GM12878 (cell line): ENCODE measurements at regions of chr13 and their contacts with region 1.

Region 1: GRCh38 chr13:101144808-101145419 is 271.4 kb downstream of the NALCN start:
- DNase-seq: peak; percentile 5
- ATAC-seq: peak; percentile 80
- H3K4me3 ChIP-seq: no peak overlapping the region
- H3K27ac ChIP-seq: no peak overlapping the region
- H3K4me1 ChIP-seq: no peaks in the 10 kb centered on the region
- H3K27me3 ChIP-seq: no peaks in the 10 kb centered on the region; a peak in 1 of 4 replicates
- CTCF ChIP-seq: peak; percentile 50 to 74 (median 51); a peak in 5 of 6 replicates
- EP300 ChIP-seq: no peak
- POLR2A ChIP-seq: no peak
- RAD21 ChIP-seq: peak; percentile 73

Region 2: GRCh38 chr13:101127741-101128353 is 17.1 kb before region 1 on chr13:
- CTCF ChIA-PET with region 1: interaction called, 17 read pairs
- POLR2A ChIA-PET with region 1: no interaction called
- RAD21 ChIA-PET with region 1: interaction called, 3 read pairs
- SMC1A ChIA-PET with region 1: interaction called, 5 read pairs
- in situ Hi-C with region 1: no loop called
- intact Hi-C with region 1: no loop called
- DNase-seq: no peak
- ATAC-seq: peak; percentile 90
- H3K4me3 ChIP-seq: no peak overlapping the region
- H3K27ac ChIP-seq: no peak overlapping the region
- H3K4me1 ChIP-seq: no peaks in the 10 kb centered on the region
- H3K27me3 ChIP-seq: no peaks in the 10 kb centered on the region
- CTCF ChIP-seq: peak; percentile 61 to 76 (median 68)
- EP300 ChIP-seq: no peak
- POLR2A ChIP-seq: no peak
- RAD21 ChIP-seq: peak; percentile 75

Region 3: DNA sequence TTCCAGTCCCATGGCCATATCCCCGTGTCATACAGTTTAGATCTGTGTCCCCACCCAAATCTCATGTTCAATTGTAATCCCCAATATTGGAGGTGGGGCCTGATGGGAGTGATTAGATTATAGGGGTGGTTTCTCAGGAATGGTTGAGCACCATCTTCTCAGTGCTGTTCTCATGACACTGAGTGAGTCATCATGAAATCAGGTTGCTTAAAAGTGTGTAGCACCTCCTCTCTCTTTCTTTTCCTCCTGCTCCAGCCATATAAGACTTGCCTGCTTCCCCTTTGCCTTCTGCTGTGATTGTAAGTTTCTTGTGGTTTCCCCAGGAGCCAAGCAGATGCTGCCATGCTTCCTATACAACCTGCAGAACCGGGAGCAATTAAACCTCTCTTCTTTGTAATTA is 73.6 kb after region 1 on chr13:
- CTCF ChIA-PET with region 1: no interaction called
- POLR2A ChIA-PET with region 1: no interaction called
- RAD21 ChIA-PET with region 1: no interaction called
- SMC1A ChIA-PET with region 1: no interaction called
- in situ Hi-C with region 1: no loop called
- intact Hi-C with region 1: no loop called
- DNase-seq: no peak
- ATAC-seq: no peak
- H3K4me3 ChIP-seq: no peak overlapping the region
- H3K27ac ChIP-seq: no peak overlapping the region
- H3K4me1 ChIP-seq: no peaks in the 10 kb centered on the region
- H3K27me3 ChIP-seq: no peaks in the 10 kb centered on the region
- CTCF ChIP-seq: no peak
- EP300 ChIP-seq: no peak
- POLR2A ChIP-seq: no peak
- RAD21 ChIP-seq: no peak

Region 4: GRCh38 chr13:101238555-101238954 is 93.6 kb after region 1 on chr13:
- CTCF ChIA-PET with region 1: no interaction called
- POLR2A ChIA-PET with region 1: no interaction called
- RAD21 ChIA-PET with region 1: no interaction called
- SMC1A ChIA-PET with region 1: no interaction called
- in situ Hi-C with region 1: no loop called
- intact Hi-C with region 1: no loop called
- DNase-seq: no peak
- ATAC-seq: no peak
- H3K4me3 ChIP-seq: no peak overlapping the region
- H3K27ac ChIP-seq: no peak overlapping the region
- H3K4me1 ChIP-seq: no peaks in the 10 kb centered on the region
- H3K27me3 ChIP-seq: no peaks in the 10 kb centered on the region
- CTCF ChIP-seq: no peak
- EP300 ChIP-seq: no peak
- POLR2A ChIP-seq: no peak
- RAD21 ChIP-seq: no peak

Region 5: DNA sequence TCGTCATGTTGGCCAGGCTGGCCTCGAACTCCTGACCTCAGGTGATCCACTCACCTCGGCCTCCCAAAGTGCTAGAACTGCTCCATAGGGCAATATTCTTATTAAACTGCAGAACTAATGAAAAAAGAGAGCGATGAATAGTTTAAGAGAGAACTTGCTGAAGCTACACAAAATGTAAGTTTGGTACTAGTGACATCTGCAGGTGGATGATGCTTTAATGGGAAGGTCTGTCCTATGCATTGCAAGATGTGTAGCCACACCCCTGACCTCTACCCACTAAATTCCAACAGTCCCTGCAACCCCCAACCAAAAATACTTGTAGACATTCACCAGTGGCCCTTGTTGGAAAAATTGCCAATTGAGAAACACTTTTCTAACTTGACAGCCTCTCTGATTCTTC is 153.6 kb after region 1 on chr13:
- CTCF ChIA-PET with region 1: interaction called, 40 read pairs
- POLR2A ChIA-PET with region 1: no interaction called
- RAD21 ChIA-PET with region 1: interaction called, 32 read pairs
- SMC1A ChIA-PET with region 1: interaction called, 31 read pairs
- in situ Hi-C with region 1: no loop called
- intact Hi-C with region 1: loop called (anchors 5 kb)
- DNase-seq: no peak
- ATAC-seq: peak; percentile 57
- H3K4me3 ChIP-seq: no peak overlapping the region
- H3K27ac ChIP-seq: no peak overlapping the region
- H3K4me1 ChIP-seq: no peaks in the 10 kb centered on the region
- H3K27me3 ChIP-seq: no peaks in the 10 kb centered on the region; a peak in 1 of 4 replicates
- CTCF ChIP-seq: peak in 1 of 3 experiments; percentile 43; a peak in 1 of 6 replicates
- EP300 ChIP-seq: no peak
- POLR2A ChIP-seq: no peak
- RAD21 ChIP-seq: 0 out of 2 replicates have a peak, but pooled peaks have one; percentile 13

Region 6: DNA sequence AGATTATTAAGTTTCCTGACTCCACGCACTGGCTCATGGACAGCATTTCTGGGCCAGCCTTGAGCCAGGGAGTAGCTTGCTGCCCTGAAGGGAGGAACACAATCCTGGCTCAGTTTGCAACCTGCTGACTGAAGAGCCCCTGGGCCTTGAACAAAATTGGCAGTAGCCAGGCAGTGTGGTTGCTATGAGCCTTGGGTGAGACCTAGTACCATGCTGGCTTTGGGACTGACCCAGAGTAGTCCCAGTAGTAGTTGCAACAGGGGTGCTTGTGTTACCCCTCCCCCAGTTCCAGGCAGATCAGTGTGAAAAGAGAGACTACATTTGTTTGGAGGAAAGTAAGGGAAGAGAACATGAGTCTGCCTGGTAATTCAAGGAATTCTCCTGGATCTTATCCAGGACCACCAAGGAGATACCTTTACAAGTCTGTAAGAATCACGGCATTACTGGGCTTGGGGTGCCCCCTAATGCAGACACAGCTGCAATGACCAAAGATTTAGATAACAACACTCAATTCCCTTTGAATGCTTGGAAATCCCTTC is 329.6 kb after region 1 on chr13:
- CTCF ChIA-PET with region 1: interaction called, 9 read pairs
- POLR2A ChIA-PET with region 1: no interaction called
- RAD21 ChIA-PET with region 1: interaction called, 5 read pairs
- SMC1A ChIA-PET with region 1: interaction called, 6 read pairs
- in situ Hi-C with region 1: no loop called
- intact Hi-C with region 1: loop called (anchors 2 kb)
- DNase-seq: no peak
- ATAC-seq: no peak
- H3K4me3 ChIP-seq: no peak overlapping the region
- H3K27ac ChIP-seq: no peak overlapping the region
- H3K4me1 ChIP-seq: no peaks in the 10 kb centered on the region
- H3K27me3 ChIP-seq: no peaks in the 10 kb centered on the region
- CTCF ChIP-seq: peak in 2 of 3 experiments; percentile 15 to 34; a peak in 2 of 6 replicates
- EP300 ChIP-seq: no peak
- POLR2A ChIP-seq: no peak
- RAD21 ChIP-seq: peak; percentile 48

Region 7: GRCh38 chr13:101757446-101758039 is 612.6 kb after region 1 on chr13:
- CTCF ChIA-PET with region 1: interaction called, 37 read pairs
- POLR2A ChIA-PET with region 1: interaction called, 5 read pairs
- RAD21 ChIA-PET with region 1: interaction called, 17 read pairs
- SMC1A ChIA-PET with region 1: interaction called, 19 read pairs
- in situ Hi-C with region 1: loop called (anchors 10 kb)
- intact Hi-C with region 1: loop called (anchors 1 kb)
- DNase-seq: no peak
- ATAC-seq: peak; percentile 94
- H3K4me3 ChIP-seq: no peak overlapping the region
- H3K27ac ChIP-seq: no peak overlapping the region
- H3K4me1 ChIP-seq: no peaks in the 10 kb centered on the region
- H3K27me3 ChIP-seq: no peaks in the 10 kb centered on the region; a peak in 1 of 4 replicates
- CTCF ChIP-seq: peak; percentile 49 to 68 (median 53); a peak in 5 of 6 replicates
- EP300 ChIP-seq: no peak
- POLR2A ChIP-seq: no peak
- RAD21 ChIP-seq: peak; percentile 81

Region 8: DNA sequence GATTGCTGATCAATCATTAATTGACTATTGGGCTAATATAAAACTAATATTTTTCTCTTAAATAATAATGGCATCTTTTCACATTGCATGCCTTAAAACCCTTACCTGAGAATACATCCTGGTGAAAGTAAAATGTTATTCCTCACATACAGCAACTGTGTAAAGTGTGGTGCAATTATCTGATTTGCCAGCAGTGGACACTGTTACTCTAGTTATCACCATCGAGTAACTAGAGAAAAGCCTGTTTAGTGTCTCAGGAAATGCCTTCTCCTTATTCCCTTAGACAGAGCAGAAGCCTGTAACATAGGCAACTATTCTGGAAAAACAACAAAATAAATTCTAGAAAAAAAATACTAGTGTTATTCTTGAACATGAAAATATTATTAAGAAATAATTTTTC is 797.1 kb after region 1 on chr13:
- CTCF ChIA-PET with region 1: interaction called, 8 read pairs
- POLR2A ChIA-PET with region 1: no interaction called
- RAD21 ChIA-PET with region 1: no interaction called
- SMC1A ChIA-PET with region 1: no interaction called
- in situ Hi-C with region 1: no loop called
- intact Hi-C with region 1: loop called (anchors 10 kb)
- DNase-seq: no peak
- ATAC-seq: peak; percentile 78
- H3K4me3 ChIP-seq: no peak overlapping the region
- H3K27ac ChIP-seq: no peak overlapping the region
- H3K4me1 ChIP-seq: no peaks in the 10 kb centered on the region
- H3K27me3 ChIP-seq: no peaks in the 10 kb centered on the region
- CTCF ChIP-seq: peak; percentile 62 to 63 (median 63)
- EP300 ChIP-seq: no peak
- POLR2A ChIP-seq: no peak
- RAD21 ChIP-seq: peak; percentile 72

Region 9: DNA sequence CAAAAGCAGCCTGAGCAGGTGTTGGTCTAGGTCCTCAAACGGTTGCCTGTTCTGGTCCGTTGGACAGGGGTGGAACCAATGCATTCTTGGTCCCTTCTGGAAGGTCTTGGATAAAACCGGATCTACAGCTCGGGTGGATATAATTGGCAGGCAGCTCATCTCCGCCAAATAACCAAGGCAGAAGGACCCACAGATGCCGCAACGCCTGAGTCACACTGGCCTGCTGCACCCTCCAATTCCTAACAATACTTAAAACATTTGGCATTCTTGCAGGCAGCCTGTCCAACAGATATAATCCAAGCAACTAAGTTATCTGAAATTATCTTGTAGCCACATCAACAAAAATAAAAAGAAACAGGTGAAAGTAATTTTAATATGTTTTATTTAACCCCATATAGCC is 1315.9 kb after region 1 on chr13:
- CTCF ChIA-PET with region 1: interaction called, 11 read pairs
- POLR2A ChIA-PET with region 1: no interaction called
- RAD21 ChIA-PET with region 1: interaction called, 3 read pairs
- SMC1A ChIA-PET with region 1: interaction called, 3 read pairs
- in situ Hi-C with region 1: loop called (anchors 25 kb)
- intact Hi-C with region 1: loop called (anchors 2 kb)
- DNase-seq: no peak
- ATAC-seq: no peak
- H3K4me3 ChIP-seq: no peak overlapping the region
- H3K27ac ChIP-seq: no peak overlapping the region
- H3K4me1 ChIP-seq: no peaks in the 10 kb centered on the region
- H3K27me3 ChIP-seq: no peaks in the 10 kb centered on the region
- CTCF ChIP-seq: no peak
- EP300 ChIP-seq: no peak
- POLR2A ChIP-seq: no peak
- RAD21 ChIP-seq: no peak